ENCODE measurements at regions of chr12 and their contacts with region 1.

Region 1: DNA sequence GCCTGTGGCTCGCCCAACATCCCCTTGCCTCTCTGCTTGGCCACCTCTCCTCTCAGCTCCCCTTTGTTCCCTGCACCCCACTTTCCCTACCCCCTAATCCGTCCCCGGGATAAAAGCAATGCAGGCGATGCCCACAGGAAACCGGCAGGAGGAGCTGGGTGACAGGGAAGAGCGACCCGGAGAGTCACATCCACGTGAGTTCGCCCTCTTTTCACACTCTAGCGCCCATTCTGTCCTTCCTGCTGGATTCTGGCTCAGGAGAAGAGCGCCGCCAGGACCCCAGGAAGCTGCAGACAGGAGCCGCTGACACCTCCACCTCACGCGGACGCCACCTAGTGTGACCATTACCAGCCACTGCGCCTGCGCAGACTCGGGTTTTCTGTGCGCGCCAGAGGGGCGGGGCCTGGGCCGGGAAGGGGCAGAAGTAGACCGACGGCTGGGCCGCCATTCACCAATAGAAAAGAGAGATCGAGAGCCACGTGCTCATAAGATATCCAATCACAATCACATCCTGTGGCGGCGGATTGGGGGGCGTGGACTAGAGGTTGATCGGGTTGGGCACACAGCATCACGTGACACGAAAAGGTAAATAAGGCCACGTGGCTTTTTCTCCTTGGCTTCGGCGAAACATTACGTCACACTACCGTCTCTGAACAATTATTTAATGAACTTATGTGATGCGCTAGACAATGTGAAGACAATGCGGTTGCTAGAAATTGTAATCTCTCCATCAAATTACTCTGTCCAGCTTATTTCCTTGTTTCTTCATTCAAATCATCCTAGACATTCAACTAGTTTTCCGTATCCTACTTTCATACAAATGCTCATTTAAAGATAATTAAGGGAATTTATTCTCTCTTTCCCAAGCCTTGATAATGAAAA is 10.1 kb downstream of the PLA2G1B start:
- DNase-seq: peak; percentile 99
- ATAC-seq: peak; percentile 100
- H3K4me3 ChIP-seq: peak overlapping the region; percentile 31 to 77 (median 64)
- H3K27ac ChIP-seq: peak overlapping the region in 11 of 12 donors; percentile 57 to 91 (median 84)
- H3K4me1 ChIP-seq: peaks cover 0 to 14% (median 8%) of the 10 kb centered on the region in 12 donors
- H3K27me3 ChIP-seq: no peaks in the 10 kb centered on the region
- CTCF ChIP-seq: peak; percentile 23 to 81 (median 52)
- POLR2A ChIP-seq: peak in 1 of 2 donors; percentile 87

Region 2: GRCh38 chr12:120175062-120175461 is 142.4 kb before region 1 on chr12:
- intact Hi-C with region 1: no loop called
- DNase-seq: no peak
- ATAC-seq: no peak
- H3K4me3 ChIP-seq: no peak overlapping the region
- H3K27ac ChIP-seq: no peak overlapping the region
- H3K4me1 ChIP-seq: no peaks in the 10 kb centered on the region
- H3K27me3 ChIP-seq: no peaks in the 10 kb centered on the region
- CTCF ChIP-seq: no peak
- POLR2A ChIP-seq: no peak

Region 3: GRCh38 chr12:120301962-120302815 is 15.3 kb before region 1 on chr12 and contains the start of gene SIRT4:
- intact Hi-C with region 1: loop called in 1 of 10 experiments (anchors 1 kb)
- DNase-seq: peak; percentile 88 to 95 (median 91)
- ATAC-seq: peak; percentile 93 to 98 (median 97)
- H3K4me3 ChIP-seq: peak within 1 kb of the TSS; percentile 38 to 85 (median 71)
- H3K27ac ChIP-seq: peak within 1 kb of the TSS in 11 of 12 donors; percentile 65 to 91 (median 82)
- H3K4me1 ChIP-seq: peaks cover 0 to 11% (median 0%) of the 10 kb centered on the region in 12 donors
- H3K27me3 ChIP-seq: no peaks in the 10 kb centered on the region
- CTCF ChIP-seq: peak; percentile 67 to 97 (median 82)
- POLR2A ChIP-seq: peak in 1 of 2 donors; percentile 46
- total RNA-seq, gene SIRT4: 3.2 to 10.6 (median 4.7) TPM

Region 4: GRCh38 chr12:120470150-120470784 is 152.8 kb after region 1 on chr12:
- intact Hi-C with region 1: no loop called
- DNase-seq: no peak
- ATAC-seq: peak in 3 of 4 donors; percentile 8 to 27 (median 21)
- H3K4me3 ChIP-seq: peak overlapping the region; percentile 63 to 99 (median 92)
- H3K27ac ChIP-seq: peak overlapping the region; percentile 76 to 96 (median 92)
- H3K4me1 ChIP-seq: peaks cover 0 to 49% (median 31%) of the 10 kb centered on the region in 12 donors
- H3K27me3 ChIP-seq: no peaks in the 10 kb centered on the region
- CTCF ChIP-seq: no peak
- POLR2A ChIP-seq: no peak

Measured in heart left ventricle (tissue), 16 donors.